SK-N-SH (cell line): ENCODE measurements at regions of chr12 and their contacts with region 1.

Region 1: DNA sequence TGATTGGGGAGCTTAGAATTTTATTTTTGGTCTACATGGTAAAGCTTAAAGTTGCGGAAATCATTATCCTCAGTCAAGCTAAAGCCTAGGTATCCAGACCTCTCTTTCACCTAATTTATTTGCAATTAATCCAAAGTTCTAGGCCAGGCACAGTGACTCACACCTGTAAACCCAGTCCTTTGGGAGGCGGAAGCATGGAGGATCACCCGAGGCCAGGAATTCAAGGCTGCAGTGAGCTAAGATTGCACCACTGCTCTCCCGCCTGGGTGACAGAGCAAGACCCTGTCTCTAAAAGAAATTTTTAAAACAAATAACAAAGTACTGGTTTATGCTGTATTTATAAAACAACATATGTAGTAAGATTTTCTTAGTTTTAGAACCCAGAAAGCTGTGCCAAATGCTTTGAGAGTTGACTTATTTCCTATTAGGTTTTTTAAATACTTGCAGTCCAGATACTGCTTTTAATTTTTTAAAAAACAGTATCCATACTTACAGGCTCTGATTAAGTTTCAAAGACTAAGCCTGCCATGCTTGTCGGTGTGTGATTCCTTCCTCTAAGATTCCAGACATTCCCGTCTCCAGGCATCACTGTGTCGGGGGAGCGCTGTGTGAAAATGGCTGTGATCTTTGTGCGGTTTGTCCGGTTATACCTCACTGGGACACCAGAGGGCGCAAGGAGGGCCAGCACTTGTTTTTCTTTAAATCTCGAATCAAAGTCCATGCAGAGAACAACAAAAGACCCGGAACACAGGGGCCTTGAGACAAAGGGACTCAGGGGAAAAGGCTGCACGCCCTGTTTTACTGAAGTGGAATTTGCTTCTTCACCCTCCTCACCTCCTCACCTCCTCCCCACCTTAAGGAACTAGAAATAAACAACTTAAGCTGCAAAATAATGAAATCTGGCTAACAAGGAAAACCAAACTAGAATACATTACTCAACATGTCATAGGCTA is 24.6 kb upstream of the TMPO start:
- DNase-seq: peak; percentile 76
- H3K4me3 ChIP-seq: peak overlapping the region in 1 of 2 experiments; percentile 18; a peak in 1 of 4 replicates
- H3K27ac ChIP-seq: peak overlapping the region; percentile 69 to 80
- H3K4me1 ChIP-seq: peaks cover 5% of the 10 kb centered on the region in 2 experiments; a peak in 2 of 4 replicates
- H3K27me3 ChIP-seq: no peaks in the 10 kb centered on the region
- CTCF ChIP-seq: peak; percentile 90
- EP300 ChIP-seq: peak in 1 of 2 experiments; percentile 17; a peak in 1 of 4 replicates
- RAD21 ChIP-seq: peak; percentile 75

Region 2: DNA sequence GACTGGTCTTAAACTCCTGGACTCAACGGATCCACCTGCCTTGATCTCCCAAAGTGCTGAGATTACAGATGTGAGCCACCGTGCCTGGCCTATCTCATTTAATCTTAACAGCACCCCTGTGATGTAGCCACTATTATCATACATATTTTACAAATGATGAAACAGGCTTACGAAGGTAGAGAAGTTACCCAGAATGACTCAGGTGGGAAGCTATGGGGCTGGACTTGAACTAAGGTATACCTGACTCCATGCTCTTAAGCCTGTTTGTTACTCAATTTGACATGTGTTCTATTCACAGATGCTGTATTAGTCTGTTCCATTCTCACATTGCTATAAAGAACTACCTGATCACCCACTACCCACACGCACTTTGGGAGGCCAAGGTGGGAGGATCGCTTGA is 12.2 kb before region 1 on chr12:
- CTCF ChIA-PET with region 1: interaction called, 15 read pairs
- POLR2A ChIA-PET with region 1: no interaction called
- DNase-seq: no peak
- H3K4me3 ChIP-seq: no peak overlapping the region
- H3K27ac ChIP-seq: no peak overlapping the region
- H3K4me1 ChIP-seq: 0 out of 4 replicates have a peak, but pooled peaks cover 0 to 4% of the 10 kb centered on the region in 2 experiments
- H3K27me3 ChIP-seq: no peaks in the 10 kb centered on the region
- CTCF ChIP-seq: no peak
- EP300 ChIP-seq: no peak
- RAD21 ChIP-seq: no peak

Region 3: DNA sequence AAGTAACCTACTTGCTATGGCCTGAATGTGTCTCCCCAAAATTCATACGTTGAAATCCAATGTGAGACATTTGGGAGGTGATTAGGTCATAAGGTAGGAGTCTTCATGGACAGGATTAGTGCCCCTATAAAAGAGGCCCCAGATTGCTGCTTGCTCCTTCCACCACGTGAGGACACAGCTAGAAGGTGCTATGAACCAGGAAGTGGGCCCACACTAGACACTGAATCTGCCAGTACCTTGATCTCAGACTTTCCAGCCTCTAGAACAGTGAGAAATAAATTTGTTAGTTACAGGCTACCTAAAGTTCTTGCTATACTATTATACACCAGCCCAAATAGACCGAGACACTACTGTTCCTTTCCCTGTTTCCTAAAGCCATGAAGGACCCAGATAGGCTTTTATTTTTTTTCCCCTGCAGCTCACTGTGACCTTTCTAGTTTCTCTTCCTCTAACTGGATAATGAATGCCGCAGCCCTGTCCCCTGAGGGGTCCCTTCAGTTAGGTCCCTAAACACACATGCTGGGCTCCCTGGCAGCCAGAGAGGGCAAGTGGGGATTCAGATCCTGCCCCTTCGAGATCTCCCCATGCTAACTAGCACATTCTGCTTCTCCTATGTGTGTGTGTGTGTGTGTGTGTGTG is 122.0 kb after region 1 on chr12:
- CTCF ChIA-PET with region 1: no interaction called
- POLR2A ChIA-PET with region 1: no interaction called
- DNase-seq: no peak
- H3K4me3 ChIP-seq: no peak overlapping the region
- H3K27ac ChIP-seq: no peak overlapping the region
- H3K4me1 ChIP-seq: no peaks in the 10 kb centered on the region
- H3K27me3 ChIP-seq: no peaks in the 10 kb centered on the region
- CTCF ChIP-seq: no peak
- EP300 ChIP-seq: no peak
- RAD21 ChIP-seq: no peak